GM12878 (cell line): ENCODE measurements at regions of chr6 and their contacts with region 1.

Region 1: GRCh38 chr6:52497652-52498408 is 77.7 kb downstream of the EFHC1 start:
- DNase-seq: peak; percentile 95
- ATAC-seq: peak; percentile 87
- H3K4me3 ChIP-seq: peak overlapping the region; percentile 61
- H3K27ac ChIP-seq: peak overlapping the region; percentile 96
- H3K4me1 ChIP-seq: peaks cover 64% of the 10 kb centered on the region
- H3K27me3 ChIP-seq: no peaks in the 10 kb centered on the region
- CTCF ChIP-seq: no peak
- EP300 ChIP-seq: peak; percentile 94 to 95
- POLR2A ChIP-seq: no peak; the same call in 1 of the 2 replicates
- RAD21 ChIP-seq: no peak

Region 2: DNA sequence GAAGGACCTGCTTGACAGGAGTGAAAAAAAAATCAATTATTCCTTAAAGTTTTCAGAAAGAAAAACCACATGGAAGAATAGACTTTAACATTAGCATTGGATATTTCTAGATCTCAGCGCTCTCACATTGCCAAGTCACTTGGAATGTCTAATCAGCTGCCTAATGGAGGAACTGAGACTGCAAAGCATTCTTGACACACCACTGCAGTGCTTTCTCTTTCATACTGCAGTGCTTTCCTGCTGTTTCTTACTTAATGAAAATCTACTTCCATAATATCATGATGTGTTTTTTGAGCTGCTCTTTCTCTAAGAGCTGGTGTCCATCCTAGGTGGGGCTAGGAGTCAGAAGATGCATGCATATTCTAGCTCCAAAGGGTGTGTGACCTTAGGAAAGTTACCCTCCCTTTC is 192.8 kb before region 1 on chr6:
- CTCF ChIA-PET with region 1: no interaction called
- POLR2A ChIA-PET with region 1: no interaction called
- RAD21 ChIA-PET with region 1: no interaction called
- SMC1A ChIA-PET with region 1: interaction called, 3 read pairs
- in situ Hi-C with region 1: loop called (anchors 5 kb)
- intact Hi-C with region 1: no loop called
- DNase-seq: no peak
- ATAC-seq: peak; percentile 74
- H3K4me3 ChIP-seq: peak overlapping the region; percentile 25; the same call in 1 of the 2 replicates
- H3K27ac ChIP-seq: peak overlapping the region; percentile 89
- H3K4me1 ChIP-seq: peaks cover 49% of the 10 kb centered on the region
- H3K27me3 ChIP-seq: no peaks in the 10 kb centered on the region
- CTCF ChIP-seq: no peak
- EP300 ChIP-seq: peak in 1 of 2 experiments; percentile 46; a peak in 2 of 4 replicates
- POLR2A ChIP-seq: no peak
- RAD21 ChIP-seq: 0 out of 2 replicates have a peak, but pooled peaks have one; percentile 1

Region 3: DNA sequence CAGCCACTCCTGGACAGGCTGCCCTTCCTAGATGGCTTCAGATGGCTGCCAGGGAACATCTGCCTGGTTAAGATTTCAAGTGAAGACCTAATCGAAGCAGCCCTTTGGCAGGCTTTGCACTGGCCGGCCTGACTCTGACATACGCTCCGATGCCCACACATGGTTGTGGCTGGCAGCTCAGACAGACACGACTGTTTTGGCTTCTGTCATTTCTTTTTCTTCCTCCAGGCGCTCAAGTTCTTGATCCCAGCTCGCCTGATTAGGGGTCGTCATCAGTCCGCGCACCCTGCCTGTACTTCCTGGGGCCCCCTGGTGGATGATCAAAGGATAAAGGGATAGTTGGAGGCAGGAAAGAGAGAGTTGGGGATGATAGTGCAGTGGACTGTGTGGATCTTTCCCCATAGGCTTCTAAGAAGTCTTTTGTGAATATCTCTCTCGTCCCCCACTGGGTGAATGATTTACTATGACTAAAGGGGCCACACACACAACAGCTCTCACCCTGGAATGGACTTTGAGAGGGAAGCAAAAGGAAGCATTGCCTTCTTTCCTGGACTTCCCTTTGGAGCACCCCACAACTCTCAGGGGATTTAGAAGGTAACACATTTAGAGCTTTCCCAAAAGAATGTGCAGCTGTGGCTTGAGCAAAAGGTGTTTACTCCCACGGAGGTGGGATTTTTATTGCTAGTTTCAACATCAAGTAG is 100.4 kb after region 1 on chr6:
- CTCF ChIA-PET with region 1: interaction called, 5 read pairs
- POLR2A ChIA-PET with region 1: interaction called, 3 read pairs
- RAD21 ChIA-PET with region 1: interaction called, 5 read pairs
- SMC1A ChIA-PET with region 1: interaction called, 6 read pairs
- in situ Hi-C with region 1: no loop called
- intact Hi-C with region 1: loop called (anchors 5 kb)
- DNase-seq: no peak
- ATAC-seq: peak; percentile 53
- H3K4me3 ChIP-seq: no peak overlapping the region
- H3K27ac ChIP-seq: no peak overlapping the region
- H3K4me1 ChIP-seq: peaks cover 30% of the 10 kb centered on the region
- H3K27me3 ChIP-seq: no peaks in the 10 kb centered on the region
- CTCF ChIP-seq: peak; percentile 41 to 60 (median 51)
- EP300 ChIP-seq: no peak
- POLR2A ChIP-seq: no peak
- RAD21 ChIP-seq: peak; percentile 56